ENCODE measurements at regions of chr5 and their contacts with region 1.

Region 1: GRCh38 chr5:119315516-119315949 is 40.3 kb upstream of the TNFAIP8 start:
- DNase-seq: peak; percentile 82
- ATAC-seq: peak; percentile 81
- H3K4me3 ChIP-seq: peak overlapping the region in 1 of 5 experiments; percentile 39
- H3K4me3 Mint-ChIP-seq: peak overlapping the region; percentile 66
- H3K27ac ChIP-seq: peak overlapping the region; percentile 57 to 65
- H3K27ac Mint-ChIP-seq: peak overlapping the region; percentile 90
- H3K4me1 ChIP-seq: peaks cover 95% of the 10 kb centered on the region in 2 donors
- H3K4me1 Mint-ChIP-seq: peaks cover 89% of the 10 kb centered on the region
- H3K27me3 ChIP-seq: no peaks in the 10 kb centered on the region
- H3K27me3 Mint-ChIP-seq: no peaks in the 10 kb centered on the region
- CTCF ChIP-seq: peak; percentile 68

Region 2: GRCh38 chr5:119290161-119290569 is 25.4 kb before region 1 on chr5:
- CTCF ChIA-PET with region 1: interaction called, 17 read pairs
- POLR2A ChIA-PET with region 1: interaction called, 7 read pairs
- intact Hi-C with region 1: no loop called
- DNase-seq: peak; percentile 78
- ATAC-seq: peak; percentile 88
- H3K4me3 ChIP-seq: peak overlapping the region in 3 of 5 experiments; percentile 13 to 20 (median 18)
- H3K4me3 Mint-ChIP-seq: peak overlapping the region; percentile 65
- H3K27ac ChIP-seq: peak overlapping the region; percentile 35 to 74
- H3K27ac Mint-ChIP-seq: peak overlapping the region; percentile 90
- H3K4me1 ChIP-seq: peaks cover 70 to 76% of the 10 kb centered on the region in 2 donors
- H3K4me1 Mint-ChIP-seq: peaks cover 83% of the 10 kb centered on the region
- H3K27me3 ChIP-seq: no peaks in the 10 kb centered on the region
- H3K27me3 Mint-ChIP-seq: no peaks in the 10 kb centered on the region
- CTCF ChIP-seq: no peak

Region 3: DNA sequence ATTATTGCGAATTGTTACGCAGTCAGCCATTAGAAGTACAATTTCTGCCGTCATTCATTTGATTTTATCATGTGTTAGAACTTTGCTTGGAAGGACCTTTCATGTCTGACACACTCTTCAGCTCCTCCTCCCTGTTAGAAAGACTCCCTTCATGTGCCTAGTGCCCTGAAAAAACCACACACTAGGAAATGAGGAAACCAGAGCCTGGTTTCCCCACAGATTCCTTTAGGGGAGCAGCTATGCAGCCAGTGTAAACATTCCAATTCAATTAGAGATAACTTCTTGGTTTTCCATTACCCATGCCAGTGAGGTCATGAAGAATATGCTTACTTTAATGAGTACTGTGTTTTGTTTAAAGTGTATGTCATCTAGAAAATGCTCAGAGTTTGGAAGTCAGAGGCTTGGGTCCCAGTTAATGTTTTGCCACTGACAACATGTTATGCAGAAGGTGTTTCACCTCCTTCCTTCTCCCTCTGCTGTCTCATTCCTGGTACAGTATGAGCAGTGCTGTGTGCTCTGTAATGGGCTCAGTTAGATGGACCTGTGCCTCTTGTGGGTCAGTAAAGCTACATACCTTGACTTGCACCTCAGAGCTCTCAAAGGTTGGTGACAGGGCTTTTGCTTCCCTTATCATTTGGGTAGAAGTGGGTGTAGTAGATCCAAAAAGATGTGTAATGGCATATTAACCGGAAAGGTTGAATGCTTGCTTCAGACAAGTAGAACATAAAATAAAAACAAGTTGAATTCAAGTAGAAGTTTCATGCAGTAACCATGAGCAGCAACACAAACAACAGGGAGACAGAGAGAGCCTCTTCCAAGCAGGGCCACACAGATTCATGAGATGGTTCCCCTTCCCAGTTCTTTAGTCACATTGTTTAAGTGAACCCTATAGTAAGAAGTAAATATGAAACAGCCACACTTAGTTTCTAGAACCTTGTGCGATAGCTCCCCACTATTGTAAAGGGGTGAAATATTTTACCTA is 12.3 kb before region 1 on chr5:
- CTCF ChIA-PET with region 1: interaction called, 17 read pairs
- POLR2A ChIA-PET with region 1: interaction called, 3 read pairs
- intact Hi-C with region 1: no loop called
- DNase-seq: no peak
- ATAC-seq: no peak
- H3K4me3 ChIP-seq: no peak overlapping the region
- H3K4me3 Mint-ChIP-seq: peak overlapping the region; percentile 15
- H3K27ac ChIP-seq: peak overlapping the region; percentile 26 to 88
- H3K27ac Mint-ChIP-seq: peak overlapping the region; percentile 83
- H3K4me1 ChIP-seq: peaks cover 75 to 87% of the 10 kb centered on the region in 2 donors
- H3K4me1 Mint-ChIP-seq: peaks cover 88% of the 10 kb centered on the region
- H3K27me3 ChIP-seq: no peaks in the 10 kb centered on the region
- H3K27me3 Mint-ChIP-seq: no peaks in the 10 kb centered on the region
- CTCF ChIP-seq: no peak

Region 4: GRCh38 chr5:119328753-119329602 is 13.4 kb after region 1 on chr5:
- CTCF ChIA-PET with region 1: interaction called, 22 read pairs
- POLR2A ChIA-PET with region 1: interaction called, 3 read pairs
- intact Hi-C with region 1: loop called (anchors 1 kb)
- DNase-seq: no peak
- ATAC-seq: no peak
- H3K4me3 ChIP-seq: no peak overlapping the region
- H3K4me3 Mint-ChIP-seq: no peak overlapping the region
- H3K27ac ChIP-seq: peak overlapping the region in 1 of 2 donors; percentile 79
- H3K27ac Mint-ChIP-seq: peak overlapping the region; percentile 86
- H3K4me1 ChIP-seq: peaks cover 79 to 84% of the 10 kb centered on the region in 2 donors
- H3K4me1 Mint-ChIP-seq: peaks cover 88% of the 10 kb centered on the region
- H3K27me3 ChIP-seq: no peaks in the 10 kb centered on the region
- H3K27me3 Mint-ChIP-seq: no peaks in the 10 kb centered on the region
- CTCF ChIP-seq: no peak

Region 5: GRCh38 chr5:119340597-119341218 is 25.2 kb after region 1 on chr5:
- CTCF ChIA-PET with region 1: interaction called, 36 read pairs
- POLR2A ChIA-PET with region 1: interaction called, 4 read pairs
- intact Hi-C with region 1: loop called (anchors 1 kb)
- DNase-seq: peak; percentile 68
- ATAC-seq: peak; percentile 22
- H3K4me3 ChIP-seq: peak overlapping the region in 4 of 5 experiments; percentile 5 to 45 (median 22)
- H3K4me3 Mint-ChIP-seq: peak overlapping the region; percentile 85
- H3K27ac ChIP-seq: peak overlapping the region; percentile 87 to 91
- H3K27ac Mint-ChIP-seq: peak overlapping the region; percentile 95
- H3K4me1 ChIP-seq: peaks cover 95 to 96% of the 10 kb centered on the region in 2 donors
- H3K4me1 Mint-ChIP-seq: peaks cover 94% of the 10 kb centered on the region
- H3K27me3 ChIP-seq: no peaks in the 10 kb centered on the region
- H3K27me3 Mint-ChIP-seq: no peaks in the 10 kb centered on the region
- CTCF ChIP-seq: no peak

Region 6: DNA sequence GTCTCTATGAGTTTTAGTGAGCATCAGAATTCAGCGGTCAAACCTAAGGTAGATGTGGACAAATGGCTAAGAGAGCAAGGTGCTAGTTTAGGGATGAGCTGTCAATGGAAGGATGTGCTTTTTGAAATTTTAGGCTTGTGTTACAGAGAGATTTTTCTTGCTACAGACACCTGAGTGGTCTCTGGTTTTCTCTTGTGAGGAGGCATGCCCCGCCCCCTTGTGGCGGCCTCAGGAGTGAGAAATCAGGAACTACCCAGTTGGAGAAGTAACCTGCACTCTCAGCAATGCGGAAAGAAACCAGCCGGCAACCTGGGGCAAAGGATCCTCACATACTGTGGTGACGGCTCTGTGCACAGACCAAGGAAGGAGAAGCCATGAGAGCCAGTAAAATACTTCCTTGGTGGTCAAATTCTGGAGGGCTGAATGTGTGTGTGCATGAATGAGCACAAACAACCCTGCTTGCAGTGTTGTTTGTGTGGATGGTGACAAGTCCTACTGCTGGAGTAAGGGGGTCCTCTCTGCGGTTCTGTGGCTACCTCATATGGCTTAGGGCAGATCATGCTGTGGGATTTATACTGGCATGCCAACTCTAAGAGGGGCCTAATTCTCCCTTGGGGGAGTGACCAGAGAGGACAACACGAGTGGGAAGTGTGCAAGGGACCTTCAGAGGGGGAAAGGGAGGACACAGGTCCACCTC is 120.1 kb after region 1 on chr5:
- CTCF ChIA-PET with region 1: interaction called, 20 read pairs
- POLR2A ChIA-PET with region 1: no interaction called
- intact Hi-C with region 1: loop called (anchors 1 kb)
- DNase-seq: peak; percentile 89
- ATAC-seq: peak; percentile 92
- H3K4me3 ChIP-seq: peak overlapping the region in 1 of 5 experiments; percentile 5
- H3K4me3 Mint-ChIP-seq: peak overlapping the region; percentile 46
- H3K27ac ChIP-seq: no peak overlapping the region
- H3K27ac Mint-ChIP-seq: peak overlapping the region; percentile 5
- H3K4me1 ChIP-seq: peaks cover 14 to 20% of the 10 kb centered on the region in 2 donors
- H3K4me1 Mint-ChIP-seq: peaks cover 28% of the 10 kb centered on the region
- H3K27me3 ChIP-seq: no peaks in the 10 kb centered on the region
- H3K27me3 Mint-ChIP-seq: no peaks in the 10 kb centered on the region
- CTCF ChIP-seq: peak; percentile 82

Measured in B cell (primary cell).